Caco-2 (cell line): ENCODE measurements at regions of chrX and their contacts with region 1.

Region 1: GRCh38 chrX:106802387-106803275 is at the start of gene TBC1D8B:
- DNase-seq: peak; percentile 84 to 87
- H3K4me3 ChIP-seq: peak within 1 kb of the TSS; percentile 38
- H3K4me3 Mint-ChIP-seq: peak within 1 kb of the TSS; percentile 91
- H3K27ac Mint-ChIP-seq: peak within 1 kb of the TSS; percentile 86
- H3K4me1 ChIP-seq: no peaks in the 10 kb centered on the region
- H3K4me1 Mint-ChIP-seq: peaks cover 7% of the 10 kb centered on the region
- H3K27me3 ChIP-seq: no peaks in the 10 kb centered on the region
- H3K27me3 Mint-ChIP-seq: no peaks in the 10 kb centered on the region
- CTCF ChIP-seq: no peak
- total RNA-seq, gene TBC1D8B: 7.4 and 8.7 TPM in 2 replicates

Region 2: DNA sequence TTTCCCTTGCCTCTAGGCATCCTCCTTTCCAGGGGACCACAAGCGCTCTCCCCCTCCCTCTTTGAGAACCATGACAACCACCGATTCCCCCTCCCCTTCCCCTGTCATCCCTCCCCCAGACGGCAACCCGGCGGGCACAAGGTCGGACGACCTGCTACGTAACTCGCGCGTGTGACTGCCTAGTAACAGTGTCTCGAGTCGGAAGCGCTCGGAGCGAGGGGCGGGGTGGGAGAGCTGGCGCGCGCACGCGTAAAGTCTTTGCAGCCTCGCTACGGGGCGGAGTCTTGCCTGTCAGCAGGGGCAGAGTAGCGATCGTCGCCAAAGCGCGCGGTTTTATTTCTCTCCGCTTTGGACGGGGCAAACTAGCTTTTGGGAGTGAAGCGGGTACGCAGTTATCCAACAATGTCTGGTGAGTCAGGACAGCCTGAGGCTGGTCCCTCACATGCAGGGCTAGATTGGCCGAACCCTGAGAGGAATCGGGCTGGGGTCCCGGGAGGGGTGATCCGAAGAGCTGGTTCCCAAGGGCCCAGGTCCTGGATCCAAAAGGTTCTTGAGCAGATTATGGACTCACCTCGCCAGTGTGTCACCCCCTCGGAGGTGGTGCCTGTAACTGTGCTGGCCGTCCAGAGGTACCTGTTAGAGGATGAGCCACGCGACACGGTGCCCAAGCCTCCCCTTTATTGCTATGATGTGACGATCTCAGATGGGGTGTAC is 190.8 kb before region 1 on chrX and contains the start of gene RADX:
- CTCF ChIA-PET with region 1: no interaction called
- POLR2A ChIA-PET with region 1: no interaction called
- intact Hi-C with region 1: loop called (anchors 5 kb)
- DNase-seq: peak; percentile 77 to 81
- H3K4me3 ChIP-seq: peak within 1 kb of the TSS; percentile 50
- H3K4me3 Mint-ChIP-seq: peak within 1 kb of the TSS; percentile 82
- H3K27ac Mint-ChIP-seq: peak within 1 kb of the TSS; percentile 36
- H3K4me1 ChIP-seq: no peaks in the 10 kb centered on the region
- H3K4me1 Mint-ChIP-seq: peaks cover 6% of the 10 kb centered on the region
- H3K27me3 ChIP-seq: no peaks in the 10 kb centered on the region
- H3K27me3 Mint-ChIP-seq: no peaks in the 10 kb centered on the region
- CTCF ChIP-seq: no peak
- total RNA-seq, gene RADX: 2.2 and 3.4 TPM in 2 replicates

Region 3: DNA sequence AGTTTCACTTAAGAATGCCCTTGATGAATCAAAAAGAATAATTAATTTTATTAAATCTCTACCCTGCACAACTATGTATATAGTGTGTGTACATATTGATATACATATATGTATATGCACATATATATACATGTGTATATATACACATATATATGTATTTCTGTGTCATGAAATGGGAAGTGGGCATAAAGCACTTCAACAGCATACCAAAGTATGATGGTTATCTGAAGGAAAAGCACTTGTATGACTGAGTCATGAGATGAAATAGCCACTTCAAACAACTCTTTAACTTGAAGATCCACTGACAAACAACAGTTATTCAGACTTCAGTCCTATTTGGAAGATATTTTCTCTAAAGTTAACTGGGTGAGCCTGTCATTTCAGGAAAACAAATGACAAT is 59.8 kb before region 1 on chrX:
- CTCF ChIA-PET with region 1: no interaction called
- POLR2A ChIA-PET with region 1: no interaction called
- intact Hi-C with region 1: loop called (anchors 2 kb)
- DNase-seq: no peak
- H3K4me3 ChIP-seq: no peak overlapping the region
- H3K4me3 Mint-ChIP-seq: no peak overlapping the region
- H3K27ac Mint-ChIP-seq: no peak overlapping the region
- H3K4me1 ChIP-seq: peaks cover 19% of the 10 kb centered on the region
- H3K4me1 Mint-ChIP-seq: no peaks in the 10 kb centered on the region
- H3K27me3 ChIP-seq: no peaks in the 10 kb centered on the region
- H3K27me3 Mint-ChIP-seq: no peaks in the 10 kb centered on the region
- CTCF ChIP-seq: no peak

Region 4: GRCh38 chrX:106780664-106781377 is 21.8 kb before region 1 on chrX:
- CTCF ChIA-PET with region 1: no interaction called
- POLR2A ChIA-PET with region 1: no interaction called
- intact Hi-C with region 1: loop called (anchors 2 kb)
- DNase-seq: peak; percentile 35
- H3K4me3 ChIP-seq: no peak overlapping the region
- H3K4me3 Mint-ChIP-seq: peak overlapping the region; percentile 27
- H3K27ac Mint-ChIP-seq: no peak overlapping the region
- H3K4me1 ChIP-seq: peaks cover 25% of the 10 kb centered on the region
- H3K4me1 Mint-ChIP-seq: peaks cover 12% of the 10 kb centered on the region
- H3K27me3 ChIP-seq: no peaks in the 10 kb centered on the region
- H3K27me3 Mint-ChIP-seq: no peaks in the 10 kb centered on the region
- CTCF ChIP-seq: no peak